ENCODE measurements at regions of chr19 and their contacts with region 1.

Region 1: DNA sequence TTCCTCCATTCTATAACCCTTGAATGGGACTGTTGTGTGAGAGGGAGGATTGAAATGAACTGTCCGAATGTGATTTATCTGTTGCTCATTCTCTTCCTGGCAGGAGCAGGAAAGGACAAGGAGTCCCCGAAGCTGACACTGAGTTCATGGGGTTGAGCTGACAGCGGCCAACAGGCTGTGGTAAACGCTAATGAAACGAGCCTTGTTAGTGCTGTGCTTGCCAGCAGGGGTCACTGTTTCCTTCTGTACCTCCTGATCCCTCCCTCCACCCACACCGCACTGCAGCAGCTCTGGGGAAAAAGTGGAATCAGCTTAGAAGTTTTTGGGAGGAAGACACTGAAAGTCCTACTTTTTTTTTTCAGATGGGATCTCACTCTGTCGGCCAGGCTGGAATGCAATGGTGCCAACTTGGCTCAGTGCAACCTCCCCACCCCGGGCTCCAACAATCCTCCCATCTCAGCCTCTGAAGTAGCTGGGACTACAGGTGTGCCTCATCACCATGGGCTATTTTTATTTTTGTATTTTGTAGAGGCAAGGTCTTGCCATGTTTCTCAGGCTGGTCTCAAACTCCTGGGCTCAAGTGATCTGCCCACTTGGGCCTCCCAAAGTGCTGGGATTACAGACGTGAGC is 6.7 kb upstream of the ZNF761 start:
- DNase-seq: peak; percentile 77
- H3K4me3 Mint-ChIP-seq: no peak overlapping the region
- H3K27ac Mint-ChIP-seq: no peak overlapping the region
- H3K4me1 Mint-ChIP-seq: no peaks in the 10 kb centered on the region
- H3K27me3 Mint-ChIP-seq: no peaks in the 10 kb centered on the region

Region 2: GRCh38 chr19:53511933-53512374 is 86.9 kb after region 1 on chr19:
- CTCF ChIA-PET with region 1: interaction called, 5 read pairs
- POLR2A ChIA-PET with region 1: no interaction called
- intact Hi-C with region 1: loop called (anchors 5 kb)
- DNase-seq: peak; percentile 67
- H3K4me3 Mint-ChIP-seq: no peak overlapping the region
- H3K27ac Mint-ChIP-seq: peak overlapping the region; percentile 23
- H3K4me1 Mint-ChIP-seq: peaks cover 4% of the 10 kb centered on the region
- H3K27me3 Mint-ChIP-seq: peaks cover 4% of the 10 kb centered on the region

Measured in activated CD4-positive, alpha-beta memory T cell treated with anti-CD3 and anti-CD28 coated beads for 36 hours (primary cell).